ENCODE measurements at regions of chr19 and their contacts with region 1.

Region 1: DNA sequence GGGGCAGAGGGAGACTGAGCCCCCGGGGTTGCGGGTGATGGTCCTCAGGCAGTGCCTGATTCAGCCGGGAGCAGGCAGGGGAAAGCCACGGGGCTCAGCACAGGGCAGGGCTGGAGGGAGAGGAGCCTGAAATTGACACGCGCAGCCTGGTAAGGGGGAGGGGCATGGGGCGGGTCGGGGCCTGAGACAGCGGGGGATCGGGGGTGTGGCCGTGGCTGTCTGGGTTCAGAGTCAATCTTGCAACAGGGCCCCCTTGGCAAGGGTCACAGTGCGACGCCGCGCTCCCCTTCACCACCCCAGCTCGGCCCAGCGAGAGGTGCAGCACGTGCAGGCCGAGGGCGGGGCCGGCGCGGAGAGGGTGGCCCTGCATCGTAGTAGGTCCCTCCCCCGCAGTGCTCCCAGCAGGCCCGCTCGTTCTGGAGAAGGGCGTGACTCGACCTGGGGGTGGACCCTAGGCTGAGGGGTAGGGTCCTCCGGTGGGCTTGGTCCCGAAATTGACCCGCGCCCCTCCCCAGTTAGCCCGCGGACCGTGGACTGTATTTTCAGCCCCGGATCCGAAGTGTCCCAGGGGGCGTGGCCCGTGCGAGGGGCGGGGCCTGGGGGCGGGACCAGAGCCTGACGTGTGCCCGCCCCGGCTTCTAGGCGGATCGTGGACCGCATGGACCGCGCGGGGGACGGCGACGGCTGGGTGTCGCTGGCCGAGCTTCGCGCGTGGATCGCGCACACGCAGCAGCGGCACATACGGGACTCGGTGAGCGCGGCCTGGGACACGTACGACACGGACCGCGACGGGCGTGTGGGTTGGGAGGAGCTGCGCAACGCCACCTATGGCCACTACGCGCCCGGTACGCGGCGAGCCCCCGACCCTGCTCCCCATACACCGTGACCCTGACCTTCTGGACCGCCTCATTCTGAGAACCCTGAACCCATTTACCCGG is 6.0 kb downstream of the RCN3 start:
- DNase-seq: peak; percentile 96
- ATAC-seq: peak; percentile 92
- H3K4me3 Mint-ChIP-seq: peak overlapping the region; percentile 62
- H3K27ac Mint-ChIP-seq: peak overlapping the region; percentile 42
- H3K4me1 Mint-ChIP-seq: peaks cover 19% of the 10 kb centered on the region
- H3K27me3 Mint-ChIP-seq: peaks cover 4% of the 10 kb centered on the region

Region 2: GRCh38 chr19:49502866-49503581 is 30.8 kb before region 1 on chr19:
- POLR2A ChIA-PET with region 1: no interaction called
- DNase-seq: no peak
- ATAC-seq: no peak
- H3K4me3 Mint-ChIP-seq: no peak overlapping the region
- H3K27ac Mint-ChIP-seq: peak overlapping the region; percentile 34
- H3K4me1 Mint-ChIP-seq: peaks cover 28% of the 10 kb centered on the region
- H3K27me3 Mint-ChIP-seq: no peaks in the 10 kb centered on the region

Region 3: DNA sequence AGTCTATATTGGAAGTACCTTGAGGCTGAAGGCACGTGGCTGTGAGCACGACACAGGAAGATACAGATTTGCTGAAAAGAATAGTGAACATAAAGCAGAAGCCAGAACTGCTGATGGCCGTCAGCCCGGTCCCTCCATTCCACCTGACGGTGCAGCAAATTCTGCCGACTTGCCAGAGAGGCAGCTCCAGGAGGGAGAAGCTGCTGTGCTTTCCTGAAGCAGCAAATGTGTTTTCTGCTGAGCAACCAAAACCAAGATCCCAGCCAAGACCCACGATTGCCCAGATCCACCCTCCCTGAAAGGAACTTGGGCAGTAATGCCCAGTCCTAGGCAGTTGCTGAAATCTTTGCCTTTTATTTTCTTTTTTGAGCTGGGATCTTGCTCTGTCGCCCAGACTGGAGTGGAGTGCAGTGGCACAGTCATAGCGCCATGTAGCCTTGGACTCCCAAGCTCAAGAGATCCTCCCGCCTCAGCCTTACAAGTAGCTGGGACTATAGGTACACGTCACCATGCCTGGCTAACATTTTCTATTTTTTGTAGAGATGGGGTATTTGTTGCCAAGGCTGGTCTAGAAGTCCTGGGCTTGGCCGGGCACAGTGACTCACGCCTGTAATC is 13.0 kb before region 1 on chr19:
- POLR2A ChIA-PET with region 1: no interaction called
- DNase-seq: no peak
- ATAC-seq: no peak
- H3K4me3 Mint-ChIP-seq: no peak overlapping the region
- H3K27ac Mint-ChIP-seq: no peak overlapping the region
- H3K4me1 Mint-ChIP-seq: peaks cover 4% of the 10 kb centered on the region
- H3K27me3 Mint-ChIP-seq: no peaks in the 10 kb centered on the region

Region 4: GRCh38 chr19:49546825-49547565 is 13.2 kb after region 1 on chr19:
- POLR2A ChIA-PET with region 1: interaction called, 12 read pairs
- DNase-seq: no peak
- ATAC-seq: peak; percentile 57
- H3K4me3 Mint-ChIP-seq: peak overlapping the region; percentile 78
- H3K27ac Mint-ChIP-seq: peak overlapping the region; percentile 56
- H3K4me1 Mint-ChIP-seq: peaks cover 28% of the 10 kb centered on the region
- H3K27me3 Mint-ChIP-seq: no peaks in the 10 kb centered on the region